Panc1 (cell line): ENCODE measurements at regions of chr9 and their contacts with region 1.

Region 1: DNA sequence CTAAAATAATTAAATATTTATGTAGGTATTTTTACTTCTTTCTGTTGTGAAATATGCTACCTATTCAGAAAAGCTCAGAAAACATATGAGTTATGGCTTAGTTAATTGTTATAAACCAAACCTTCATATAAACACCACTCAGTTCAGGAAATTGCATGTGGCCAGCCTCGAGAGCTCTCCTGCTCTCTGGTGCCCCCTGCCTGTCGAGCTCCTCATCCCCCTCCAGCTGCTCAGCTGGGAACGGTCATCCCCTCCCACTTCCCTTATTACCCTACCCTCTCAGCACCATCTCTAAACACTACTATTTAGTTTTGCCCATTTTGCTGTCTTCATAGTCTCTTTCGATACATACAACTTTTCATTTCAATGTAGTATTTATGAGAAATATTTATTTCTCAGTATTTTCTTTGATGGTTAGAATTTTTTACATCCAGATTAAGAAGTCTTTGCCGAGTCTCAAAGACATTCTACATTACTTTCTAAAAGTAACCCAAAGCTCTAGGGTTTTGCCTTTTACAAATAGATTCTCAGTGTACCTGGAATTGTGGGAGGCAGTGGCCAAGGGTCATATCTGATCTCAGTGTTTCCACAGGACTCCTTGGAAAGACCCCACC is 51.2 kb upstream of the SEMA4D start:
- DNase-seq: peak; percentile 28
- ATAC-seq: peak; percentile 95
- H3K4me3 ChIP-seq: no peak overlapping the region
- H3K27ac ChIP-seq: no peak overlapping the region
- H3K4me1 ChIP-seq: no peaks in the 10 kb centered on the region
- H3K27me3 ChIP-seq: no peaks in the 10 kb centered on the region
- CTCF ChIP-seq: peak; percentile 88

Region 2: GRCh38 chr9:89323390-89323789 is 225.7 kb before region 1 on chr9:
- CTCF ChIA-PET with region 1: interaction called, 5 read pairs
- POLR2A ChIA-PET with region 1: no interaction called
- in situ Hi-C with region 1: no loop called
- intact Hi-C with region 1: loop called (anchors 5 kb)
- DNase-seq: no peak
- ATAC-seq: no peak
- H3K4me3 ChIP-seq: no peak overlapping the region
- H3K27ac ChIP-seq: no peak overlapping the region
- H3K4me1 ChIP-seq: peaks cover 10% of the 10 kb centered on the region
- H3K27me3 ChIP-seq: no peaks in the 10 kb centered on the region
- CTCF ChIP-seq: no peak

Region 3: GRCh38 chr9:89375191-89375760 is 173.9 kb before region 1 on chr9:
- CTCF ChIA-PET with region 1: interaction called, 3 read pairs
- POLR2A ChIA-PET with region 1: no interaction called
- in situ Hi-C with region 1: no loop called
- intact Hi-C with region 1: loop called (anchors 10 kb)
- DNase-seq: no peak
- ATAC-seq: no peak
- H3K4me3 ChIP-seq: no peak overlapping the region
- H3K27ac ChIP-seq: no peak overlapping the region
- H3K4me1 ChIP-seq: no peaks in the 10 kb centered on the region
- H3K27me3 ChIP-seq: no peaks in the 10 kb centered on the region
- CTCF ChIP-seq: no peak

Region 4: GRCh38 chr9:89428901-89429890 is 119.9 kb before region 1 on chr9:
- CTCF ChIA-PET with region 1: no interaction called
- POLR2A ChIA-PET with region 1: no interaction called
- in situ Hi-C with region 1: no loop called
- intact Hi-C with region 1: loop called (anchors 10 kb)
- DNase-seq: no peak
- ATAC-seq: no peak
- H3K4me3 ChIP-seq: no peak overlapping the region
- H3K27ac ChIP-seq: no peak overlapping the region
- H3K4me1 ChIP-seq: no peaks in the 10 kb centered on the region
- H3K27me3 ChIP-seq: no peaks in the 10 kb centered on the region
- CTCF ChIP-seq: no peak

Region 5: DNA sequence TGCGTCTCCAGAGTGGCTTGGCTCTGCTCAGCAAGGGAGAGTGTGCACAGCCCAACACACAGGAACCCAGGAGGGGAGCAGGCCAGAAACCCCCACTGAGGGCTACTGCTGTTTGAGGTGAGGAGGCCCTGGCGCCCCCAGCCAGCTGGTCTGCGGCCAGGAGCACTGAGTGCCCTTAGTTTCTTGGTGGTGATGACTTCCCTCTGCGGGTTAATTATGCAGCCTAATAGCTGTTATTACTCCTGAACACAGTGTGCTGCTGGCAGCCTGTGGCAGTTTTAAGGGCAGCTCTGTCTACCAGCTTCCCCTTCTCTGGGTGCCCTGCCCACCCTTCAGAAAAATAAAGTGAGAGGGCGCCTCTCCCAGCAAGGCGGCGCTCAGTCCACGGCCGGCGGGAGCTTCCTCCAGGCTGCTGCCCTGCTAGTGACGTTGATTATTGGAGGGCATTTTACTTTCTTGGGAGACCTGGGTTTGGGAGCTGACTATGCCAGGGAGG is 74.8 kb after region 1 on chr9:
- CTCF ChIA-PET with region 1: no interaction called
- POLR2A ChIA-PET with region 1: no interaction called
- in situ Hi-C with region 1: no loop called
- intact Hi-C with region 1: no loop called
- DNase-seq: no peak
- ATAC-seq: no peak
- H3K4me3 ChIP-seq: no peak overlapping the region
- H3K27ac ChIP-seq: no peak overlapping the region
- H3K4me1 ChIP-seq: no peaks in the 10 kb centered on the region
- H3K27me3 ChIP-seq: no peaks in the 10 kb centered on the region; the same call in 1 of the 2 replicates
- CTCF ChIP-seq: no peak